Activated CD8-positive, alpha-beta T cell treated with anti-CD3 and anti-CD28 coated beads for 36 hours (primary cell): ENCODE measurements at regions of chr13 and their contacts with region 1.

Region 1: GRCh38 chr13:25574437-25575411 is 202.9 kb downstream of the ATP8A2 start:
- DNase-seq: peak; percentile 85
- ATAC-seq: peak; percentile 62
- H3K4me3 Mint-ChIP-seq: no peak overlapping the region
- H3K27ac Mint-ChIP-seq: no peak overlapping the region
- H3K4me1 Mint-ChIP-seq: no peaks in the 10 kb centered on the region
- H3K27me3 Mint-ChIP-seq: peaks cover 18% of the 10 kb centered on the region
- CTCF ChIP-seq: peak; percentile 95

Region 2: GRCh38 chr13:25420161-25420560 is 154.6 kb before region 1 on chr13:
- CTCF ChIA-PET with region 1: no interaction called
- POLR2A ChIA-PET with region 1: no interaction called
- intact Hi-C with region 1: no loop called
- DNase-seq: no peak
- ATAC-seq: no peak
- H3K4me3 Mint-ChIP-seq: no peak overlapping the region
- H3K27ac Mint-ChIP-seq: no peak overlapping the region
- H3K4me1 Mint-ChIP-seq: no peaks in the 10 kb centered on the region
- H3K27me3 Mint-ChIP-seq: peaks cover 15% of the 10 kb centered on the region
- CTCF ChIP-seq: no peak

Region 3: DNA sequence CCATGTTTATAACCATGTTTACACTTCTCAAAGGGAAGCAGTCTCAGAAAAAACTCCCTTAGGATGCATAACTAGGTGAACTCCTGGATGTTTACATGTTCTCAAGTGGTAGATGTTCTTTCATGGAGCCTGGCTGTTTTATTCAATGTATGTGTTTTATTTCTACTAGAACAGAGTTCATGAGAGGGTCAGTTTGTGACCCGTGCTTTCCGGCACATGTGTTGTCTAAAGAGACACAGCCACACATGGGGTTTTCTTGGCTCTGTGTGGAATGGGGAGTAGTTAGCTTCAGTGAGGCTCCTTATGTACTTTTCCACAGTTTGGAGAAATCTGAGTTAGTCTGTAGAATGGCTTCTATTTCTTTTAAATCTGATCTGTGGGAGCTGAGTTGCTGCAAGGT is 142.0 kb before region 1 on chr13:
- CTCF ChIA-PET with region 1: no interaction called
- POLR2A ChIA-PET with region 1: no interaction called
- intact Hi-C with region 1: no loop called
- DNase-seq: no peak
- ATAC-seq: no peak
- H3K4me3 Mint-ChIP-seq: no peak overlapping the region
- H3K27ac Mint-ChIP-seq: no peak overlapping the region
- H3K4me1 Mint-ChIP-seq: no peaks in the 10 kb centered on the region
- H3K27me3 Mint-ChIP-seq: peaks cover 7% of the 10 kb centered on the region
- CTCF ChIP-seq: no peak

Region 4: DNA sequence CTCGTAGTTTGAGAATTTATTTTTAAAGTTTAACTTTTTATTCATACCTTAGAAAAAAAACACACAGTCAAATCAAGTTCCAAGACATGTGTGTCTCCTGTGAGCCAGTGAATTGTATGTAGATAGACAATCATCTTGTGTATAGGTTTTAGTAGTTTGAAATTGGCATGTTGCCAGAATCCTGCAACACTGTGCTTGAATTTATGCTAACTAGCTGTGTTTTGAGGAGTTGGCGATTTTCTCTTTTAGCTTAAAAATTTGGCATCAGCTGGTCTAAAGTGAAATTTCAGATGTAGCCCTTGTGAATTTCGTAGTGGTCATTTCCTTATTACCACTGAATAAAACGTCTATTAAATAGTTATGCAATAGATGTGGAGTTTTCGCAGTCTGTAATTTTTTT is 10.3 kb after region 1 on chr13:
- CTCF ChIA-PET with region 1: interaction called, 13 read pairs
- POLR2A ChIA-PET with region 1: no interaction called
- intact Hi-C with region 1: no loop called
- DNase-seq: no peak
- ATAC-seq: no peak
- H3K4me3 Mint-ChIP-seq: no peak overlapping the region
- H3K27ac Mint-ChIP-seq: no peak overlapping the region
- H3K4me1 Mint-ChIP-seq: no peaks in the 10 kb centered on the region
- H3K27me3 Mint-ChIP-seq: peaks cover 11% of the 10 kb centered on the region
- CTCF ChIP-seq: no peak

Region 5: DNA sequence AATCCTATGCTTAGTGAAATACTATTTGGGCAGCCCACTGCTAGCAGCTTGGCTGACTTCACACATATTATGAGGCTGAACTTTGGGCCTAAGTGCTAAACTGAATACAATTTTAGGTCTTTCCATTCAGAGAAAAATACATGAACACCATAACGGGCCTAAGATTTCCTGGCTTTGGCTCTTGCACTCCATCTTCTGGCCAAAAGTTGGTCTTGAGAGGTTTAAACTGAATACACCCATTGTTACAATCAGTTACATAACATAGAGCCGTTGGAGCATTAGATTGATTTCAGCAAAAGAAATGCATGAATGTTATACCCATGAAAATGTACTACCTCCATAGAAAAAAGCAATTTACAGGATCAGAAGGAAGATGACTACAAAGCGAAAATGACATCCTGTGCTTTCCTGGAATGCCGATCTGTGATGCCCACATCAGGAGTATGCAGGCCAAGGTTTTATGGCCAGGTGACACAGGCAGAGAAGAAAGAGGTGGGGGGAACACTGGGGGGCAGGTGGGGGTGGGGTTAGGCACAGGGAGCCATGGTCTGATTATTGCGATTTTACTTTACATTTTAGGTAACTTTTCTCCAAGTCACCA is 488.2 kb after region 1 on chr13:
- CTCF ChIA-PET with region 1: interaction called, 11 read pairs
- POLR2A ChIA-PET with region 1: no interaction called
- intact Hi-C with region 1: loop called (anchors 5 kb)
- DNase-seq: peak; percentile 58
- ATAC-seq: peak; percentile 42
- H3K4me3 Mint-ChIP-seq: no peak overlapping the region
- H3K27ac Mint-ChIP-seq: no peak overlapping the region
- H3K4me1 Mint-ChIP-seq: no peaks in the 10 kb centered on the region
- H3K27me3 Mint-ChIP-seq: no peaks in the 10 kb centered on the region
- CTCF ChIP-seq: peak; percentile 67

Region 6: GRCh38 chr13:26074706-26075105 is 500.0 kb after region 1 on chr13:
- CTCF ChIA-PET with region 1: interaction called, 14 read pairs
- POLR2A ChIA-PET with region 1: no interaction called
- intact Hi-C with region 1: no loop called
- DNase-seq: no peak
- ATAC-seq: no peak
- H3K4me3 Mint-ChIP-seq: no peak overlapping the region
- H3K27ac Mint-ChIP-seq: no peak overlapping the region
- H3K4me1 Mint-ChIP-seq: no peaks in the 10 kb centered on the region
- H3K27me3 Mint-ChIP-seq: peaks cover 15% of the 10 kb centered on the region
- CTCF ChIP-seq: no peak